Activated T-helper 1 cell treated with anti-CD3 and anti-CD28 coated beads, Interleukin-12 subunit alpha, Interleukin-12 subunit beta, Interleukin-2, Interleukin-4 antibody, amounts not matched to agents 30 ng/mL and 10 ng/mL and 1 ng/mL, durations not matched to agents 14 hours and 24 hours and 36 hours (primary cell): ENCODE measurements at regions of chr1 and their contacts with region 1.

Region 1: GRCh38 chr1:25771246-25772114 is 28.5 kb upstream of the SELENON start:
- DNase-seq: no peak
- H3K4me3 Mint-ChIP-seq: no peak overlapping the region
- H3K27ac Mint-ChIP-seq: no peak overlapping the region
- H3K4me1 Mint-ChIP-seq: peaks cover 29% of the 10 kb centered on the region
- H3K27me3 Mint-ChIP-seq: peaks cover 42% of the 10 kb centered on the region

Region 2: DNA sequence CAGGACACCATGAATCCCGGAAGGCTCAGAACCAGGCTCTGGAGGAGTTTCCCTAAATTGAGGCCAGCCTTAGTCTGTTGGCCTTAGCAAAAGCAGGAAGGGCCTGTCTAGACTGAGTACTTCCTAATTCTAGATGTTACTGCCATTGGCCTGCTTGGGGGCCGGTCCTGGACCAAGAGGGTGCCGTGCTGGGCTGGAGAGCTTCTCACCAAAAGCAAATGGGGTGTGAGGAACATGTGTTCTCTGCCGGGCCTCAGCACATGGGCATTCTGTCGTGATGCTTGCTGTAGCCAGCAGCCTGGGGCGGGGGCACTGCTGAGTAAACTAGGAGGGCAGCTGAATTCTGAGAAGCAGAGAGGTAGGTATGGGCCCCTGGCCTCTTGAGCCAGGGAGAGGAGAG is 190.6 kb before region 1 on chr1:
- intact Hi-C with region 1: no loop called
- DNase-seq: no peak
- H3K4me3 Mint-ChIP-seq: no peak overlapping the region
- H3K27ac Mint-ChIP-seq: no peak overlapping the region
- H3K4me1 Mint-ChIP-seq: no peaks in the 10 kb centered on the region
- H3K27me3 Mint-ChIP-seq: peaks cover 20% of the 10 kb centered on the region

Region 3: DNA sequence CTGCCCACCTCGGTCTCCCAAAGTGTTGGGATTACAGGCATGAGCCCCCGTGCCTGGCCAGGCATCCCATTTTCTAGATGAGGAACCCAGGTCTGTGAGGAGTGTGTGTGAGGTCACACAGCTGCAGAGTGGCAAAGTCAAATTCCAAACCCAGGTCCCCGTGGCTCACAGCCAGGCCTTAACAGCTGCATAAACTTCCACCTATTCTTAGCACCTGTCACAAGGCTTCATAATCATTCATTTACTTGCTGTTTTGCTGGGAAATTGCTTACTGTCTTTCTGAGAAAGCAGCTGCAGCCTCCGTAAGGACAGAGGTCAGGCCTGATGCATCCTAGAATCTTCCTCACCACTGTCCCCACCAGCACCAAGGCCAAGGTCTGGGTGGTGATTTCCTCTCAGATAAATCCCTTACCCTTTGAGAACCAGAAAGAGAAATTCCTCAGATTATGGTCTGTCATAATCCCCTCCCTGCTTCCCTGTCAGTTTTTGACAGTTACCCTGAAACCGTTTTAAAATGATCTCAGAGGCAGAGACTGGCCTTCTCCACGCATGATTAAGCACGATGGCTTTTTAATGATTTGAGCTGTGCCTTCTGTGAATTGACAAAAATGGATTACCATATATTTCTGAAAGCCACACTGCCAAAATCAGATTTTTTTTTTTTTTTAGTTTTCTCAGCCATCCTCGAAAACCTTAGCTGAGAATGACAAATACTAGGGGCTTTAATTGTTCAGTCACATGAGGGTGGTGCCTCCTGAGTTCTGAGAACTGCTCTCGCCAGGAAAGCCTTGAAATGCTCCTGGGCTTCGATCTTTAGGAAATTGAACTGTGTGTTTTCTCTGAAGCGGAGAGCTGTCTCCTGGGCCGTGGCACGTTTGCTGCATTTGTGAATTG is 41.5 kb before region 1 on chr1:
- intact Hi-C with region 1: loop called (anchors 2 kb)
- DNase-seq: no peak
- H3K4me3 Mint-ChIP-seq: no peak overlapping the region
- H3K27ac Mint-ChIP-seq: no peak overlapping the region
- H3K4me1 Mint-ChIP-seq: peaks cover 17% of the 10 kb centered on the region
- H3K27me3 Mint-ChIP-seq: peaks cover 48% of the 10 kb centered on the region

Region 4: DNA sequence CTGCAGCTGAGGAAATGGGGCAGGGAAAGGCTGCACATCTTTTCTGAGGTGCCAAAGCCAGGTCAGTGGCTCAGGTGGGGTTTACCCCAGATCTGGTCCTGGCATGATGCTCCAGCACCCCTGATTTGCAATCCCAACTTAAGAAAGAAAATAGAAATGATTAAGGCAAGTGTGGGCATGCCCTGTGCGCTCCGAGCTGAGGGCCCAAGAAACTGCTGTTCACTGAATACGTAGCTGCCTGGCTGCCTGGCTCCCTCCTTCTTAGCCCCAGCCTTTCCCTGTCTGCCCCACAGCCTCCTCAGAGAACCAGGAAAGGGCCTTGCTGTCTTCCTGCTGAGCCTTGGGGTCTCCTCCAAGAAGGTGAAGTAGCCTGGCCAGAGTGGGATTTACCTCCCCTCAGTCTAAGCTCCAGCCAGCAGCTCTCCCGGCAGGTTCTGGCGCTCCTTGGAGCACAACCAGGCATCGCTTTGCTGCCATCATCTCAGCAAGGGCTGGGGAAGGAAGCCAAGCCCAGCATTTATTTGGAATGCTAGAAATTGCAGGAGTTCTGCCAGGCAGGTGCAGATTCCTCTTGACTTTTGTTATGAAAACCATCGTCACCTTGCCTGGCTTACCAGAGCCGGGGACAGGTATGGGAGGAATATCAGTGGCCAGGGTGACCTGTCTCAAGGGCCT is 22.8 kb before region 1 on chr1:
- intact Hi-C with region 1: no loop called
- DNase-seq: no peak
- H3K4me3 Mint-ChIP-seq: no peak overlapping the region
- H3K27ac Mint-ChIP-seq: no peak overlapping the region
- H3K4me1 Mint-ChIP-seq: no peaks in the 10 kb centered on the region
- H3K27me3 Mint-ChIP-seq: peaks cover 20% of the 10 kb centered on the region

Region 5: GRCh38 chr1:26066857-26067256 is 295.4 kb after region 1 on chr1:
- intact Hi-C with region 1: no loop called
- DNase-seq: no peak
- H3K4me3 Mint-ChIP-seq: no peak overlapping the region
- H3K27ac Mint-ChIP-seq: no peak overlapping the region
- H3K4me1 Mint-ChIP-seq: no peaks in the 10 kb centered on the region
- H3K27me3 Mint-ChIP-seq: peaks cover 9% of the 10 kb centered on the region